Activated CD4-positive, alpha-beta memory T cell treated with anti-CD3 and anti-CD28 coated beads, Interleukin-2, amount 10 ng/mL, durations not matched to agents 7 days and 5 days (primary cell): ENCODE measurements at regions of chr6 and their contacts with region 1.

Region 1: DNA sequence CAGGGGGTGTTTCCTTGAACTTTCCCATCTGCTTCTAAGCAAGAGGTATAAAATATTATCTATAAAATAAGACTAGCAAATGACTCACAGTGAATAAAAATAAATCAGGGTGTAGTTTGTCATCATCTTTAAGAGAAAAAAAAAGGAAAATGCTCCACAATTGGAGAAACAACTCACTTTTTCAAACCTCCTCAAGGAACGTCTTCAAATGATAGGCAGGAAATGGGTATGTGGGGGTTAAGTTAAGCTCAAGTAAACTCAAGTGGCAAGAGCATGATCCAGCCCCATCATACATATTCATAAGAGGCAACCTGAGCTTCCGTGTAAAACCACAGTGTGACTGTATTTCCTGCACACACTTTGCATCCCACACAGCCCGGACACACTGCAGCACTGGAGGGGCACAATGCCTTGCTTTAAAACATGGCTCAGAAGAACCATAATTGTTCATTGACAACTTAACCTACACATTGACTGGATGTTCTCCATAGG is 58.5 kb upstream of the CEP85L start:
- DNase-seq: peak; percentile 83
- H3K4me3 Mint-ChIP-seq: peak overlapping the region; percentile 96
- H3K27ac Mint-ChIP-seq: peak overlapping the region; percentile 94
- H3K4me1 Mint-ChIP-seq: peaks cover 64% of the 10 kb centered on the region
- H3K27me3 Mint-ChIP-seq: no peaks in the 10 kb centered on the region

Region 2: DNA sequence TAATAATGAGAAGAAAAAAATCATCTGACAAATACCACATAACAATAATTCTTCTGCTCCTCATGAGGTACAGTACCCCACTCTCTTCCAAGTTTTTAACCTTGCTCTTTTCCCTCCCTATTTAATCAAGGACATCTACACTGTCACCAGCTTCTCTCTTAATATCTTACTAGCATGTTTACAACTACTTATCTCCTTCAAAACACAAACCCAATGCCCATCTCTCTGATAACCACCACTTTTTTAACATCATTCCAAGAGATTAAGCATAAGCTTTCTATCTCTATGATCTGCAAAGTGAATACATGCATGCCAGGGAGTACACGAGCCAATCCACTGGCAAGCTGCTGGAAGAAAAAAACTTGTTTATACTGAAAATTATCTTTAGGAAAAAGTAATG is 68.9 kb before region 1 on chr6:
- CTCF ChIA-PET with region 1: no interaction called
- POLR2A ChIA-PET with region 1: no interaction called
- DNase-seq: no peak
- H3K4me3 Mint-ChIP-seq: no peak overlapping the region
- H3K27ac Mint-ChIP-seq: no peak overlapping the region
- H3K4me1 Mint-ChIP-seq: peaks cover 31% of the 10 kb centered on the region
- H3K27me3 Mint-ChIP-seq: no peaks in the 10 kb centered on the region

Region 3: GRCh38 chr6:118651282-118652050 is 58.4 kb before region 1 on chr6 and contains the start of gene CEP85L:
- CTCF ChIA-PET with region 1: interaction called, 9 read pairs
- POLR2A ChIA-PET with region 1: interaction called, 52 read pairs
- DNase-seq: peak; percentile 90
- H3K4me3 Mint-ChIP-seq: peak within 1 kb of the TSS; percentile 82
- H3K27ac Mint-ChIP-seq: peak within 1 kb of the TSS; percentile 75
- H3K4me1 Mint-ChIP-seq: peaks cover 34% of the 10 kb centered on the region
- H3K27me3 Mint-ChIP-seq: no peaks in the 10 kb centered on the region
- total RNA-seq, gene CEP85L: 36.2 to 38.0 TPM

Region 4: DNA sequence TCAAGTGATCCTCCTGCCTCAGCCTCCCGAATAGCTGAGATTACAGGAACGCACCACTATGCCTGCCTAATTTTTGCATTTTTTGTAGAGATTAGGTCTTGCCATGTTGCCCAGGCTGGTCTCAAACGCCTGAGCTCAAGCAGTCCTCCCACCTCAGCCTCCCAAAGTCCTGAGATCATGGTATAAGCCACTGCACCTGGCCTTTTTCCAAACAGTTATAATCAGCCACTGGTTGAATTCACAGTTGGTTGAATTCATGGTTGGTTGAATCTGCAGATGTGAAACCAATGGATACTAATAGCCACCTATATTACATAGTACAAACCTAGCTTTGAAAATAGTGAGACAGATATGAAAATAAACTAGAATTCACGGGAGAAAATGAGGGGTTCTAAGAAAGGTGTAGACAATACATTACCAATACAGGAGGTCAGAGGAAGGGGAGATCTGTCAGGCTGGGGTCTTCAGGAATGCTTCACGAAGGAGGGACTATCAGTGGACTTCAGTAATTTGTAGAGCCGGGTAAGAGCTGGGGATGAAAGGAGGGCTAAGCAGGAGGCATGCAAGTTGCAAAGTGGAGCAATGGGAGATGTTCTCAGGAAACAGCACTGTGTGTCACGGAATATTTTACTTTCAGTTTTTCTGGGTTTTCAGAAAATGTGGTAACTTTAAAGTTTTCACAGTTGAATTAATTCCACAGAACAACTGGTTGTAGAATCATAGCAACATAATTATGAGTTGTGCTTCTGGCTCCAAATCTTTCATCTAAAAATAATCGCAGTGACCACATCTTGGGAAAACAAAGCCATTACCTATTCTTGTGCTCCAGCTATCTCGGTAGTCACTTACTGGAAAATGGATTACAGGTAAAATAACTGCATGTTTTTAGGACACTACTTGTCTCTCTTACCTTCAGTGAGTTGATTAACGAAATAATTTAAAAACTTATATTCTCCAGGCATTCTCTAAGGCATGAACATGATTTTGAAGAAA is 45.6 kb before region 1 on chr6:
- CTCF ChIA-PET with region 1: interaction called, 3 read pairs
- POLR2A ChIA-PET with region 1: interaction called, 19 read pairs
- DNase-seq: no peak
- H3K4me3 Mint-ChIP-seq: peak overlapping the region; percentile 85
- H3K27ac Mint-ChIP-seq: peak overlapping the region; percentile 73
- H3K4me1 Mint-ChIP-seq: peaks cover 38% of the 10 kb centered on the region
- H3K27me3 Mint-ChIP-seq: no peaks in the 10 kb centered on the region

Region 5: GRCh38 chr6:118725944-118726343 is 16.0 kb after region 1 on chr6:
- CTCF ChIA-PET with region 1: interaction called, 3 read pairs
- POLR2A ChIA-PET with region 1: interaction called, 16 read pairs
- DNase-seq: peak; percentile 48
- H3K4me3 Mint-ChIP-seq: no peak overlapping the region
- H3K27ac Mint-ChIP-seq: peak overlapping the region; percentile 38
- H3K4me1 Mint-ChIP-seq: peaks cover 22% of the 10 kb centered on the region
- H3K27me3 Mint-ChIP-seq: peaks cover 2% of the 10 kb centered on the region

Region 6: GRCh38 chr6:118800394-118801071 is 90.6 kb after region 1 on chr6:
- CTCF ChIA-PET with region 1: interaction called, 9 read pairs
- POLR2A ChIA-PET with region 1: interaction called, 47 read pairs
- DNase-seq: peak; percentile 87
- H3K4me3 Mint-ChIP-seq: peak overlapping the region; percentile 14
- H3K27ac Mint-ChIP-seq: peak overlapping the region; percentile 77
- H3K4me1 Mint-ChIP-seq: peaks cover 44% of the 10 kb centered on the region
- H3K27me3 Mint-ChIP-seq: no peaks in the 10 kb centered on the region

Region 7: GRCh38 chr6:118934461-118935330 is 224.8 kb after region 1 on chr6 and contains the start of gene MCM9:
- CTCF ChIA-PET with region 1: no interaction called
- POLR2A ChIA-PET with region 1: interaction called, 12 read pairs
- DNase-seq: peak; percentile 89
- H3K4me3 Mint-ChIP-seq: peak within 1 kb of the TSS; percentile 81
- H3K27ac Mint-ChIP-seq: peak within 1 kb of the TSS; percentile 85
- H3K4me1 Mint-ChIP-seq: peaks cover 28% of the 10 kb centered on the region
- H3K27me3 Mint-ChIP-seq: no peaks in the 10 kb centered on the region
- total RNA-seq, gene MCM9: 14.8 to 15.7 TPM